Calu3 (cell line): ENCODE measurements at regions of chr12 and their contacts with region 1.

Region 1: GRCh38 chr12:132523576-132524331 is 33.8 kb downstream of the FBRSL1 start:
- DNase-seq: peak; percentile 92
- H3K4me3 Mint-ChIP-seq: peak overlapping the region; percentile 50
- H3K27ac Mint-ChIP-seq: no peak overlapping the region
- H3K4me1 Mint-ChIP-seq: peaks cover 16% of the 10 kb centered on the region
- H3K27me3 Mint-ChIP-seq: no peaks in the 10 kb centered on the region
- CTCF ChIP-seq: peak; percentile 93

Region 2: DNA sequence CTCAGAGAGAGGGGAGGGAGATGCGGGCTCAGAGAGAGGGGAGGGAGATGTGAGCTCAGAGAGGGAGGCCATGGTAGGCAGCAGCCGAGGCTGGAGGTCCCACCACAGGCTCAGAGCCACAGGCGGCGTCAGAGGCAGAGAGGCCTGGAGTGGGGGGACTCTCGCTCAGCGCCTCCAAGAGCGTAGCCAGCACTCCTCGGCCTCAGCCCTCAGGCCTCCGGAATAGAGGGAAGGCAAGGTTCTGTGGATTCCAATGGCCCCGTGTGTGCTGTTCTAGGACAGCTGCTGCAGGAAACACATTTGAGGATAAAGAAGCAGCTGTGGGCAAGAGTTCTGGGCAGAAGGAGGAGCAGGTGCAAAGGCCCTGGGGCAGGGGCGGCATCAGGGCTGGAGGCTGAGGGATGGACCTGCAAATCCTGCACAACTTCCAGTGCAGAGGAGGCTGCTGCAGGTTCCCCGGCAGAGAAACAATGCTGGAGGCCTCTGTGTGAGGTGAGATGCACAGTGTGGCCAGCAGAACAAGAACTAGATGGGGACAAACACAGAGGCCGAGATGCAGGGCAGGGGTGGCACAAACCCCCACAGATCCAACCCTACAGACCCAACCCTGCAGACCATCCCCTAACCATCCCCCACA is 135.3 kb before region 1 on chr12:
- CTCF ChIA-PET with region 1: interaction called, 10 read pairs
- intact Hi-C with region 1: no loop called
- DNase-seq: no peak
- H3K4me3 Mint-ChIP-seq: no peak overlapping the region
- H3K27ac Mint-ChIP-seq: no peak overlapping the region
- H3K4me1 Mint-ChIP-seq: peaks cover 6% of the 10 kb centered on the region
- H3K27me3 Mint-ChIP-seq: peaks cover 74% of the 10 kb centered on the region
- CTCF ChIP-seq: no peak

Region 3: GRCh38 chr12:132492522-132492921 is 31.2 kb before region 1 on chr12:
- CTCF ChIA-PET with region 1: no interaction called
- intact Hi-C with region 1: loop called (anchors 2 kb)
- DNase-seq: no peak
- H3K4me3 Mint-ChIP-seq: peak overlapping the region; percentile 76
- H3K27ac Mint-ChIP-seq: no peak overlapping the region
- H3K4me1 Mint-ChIP-seq: peaks cover 58% of the 10 kb centered on the region
- H3K27me3 Mint-ChIP-seq: peaks cover 19% of the 10 kb centered on the region
- CTCF ChIP-seq: no peak